PC-9 (cell line): ENCODE measurements at regions of chr15 and their contacts with region 1.

Region 1: DNA sequence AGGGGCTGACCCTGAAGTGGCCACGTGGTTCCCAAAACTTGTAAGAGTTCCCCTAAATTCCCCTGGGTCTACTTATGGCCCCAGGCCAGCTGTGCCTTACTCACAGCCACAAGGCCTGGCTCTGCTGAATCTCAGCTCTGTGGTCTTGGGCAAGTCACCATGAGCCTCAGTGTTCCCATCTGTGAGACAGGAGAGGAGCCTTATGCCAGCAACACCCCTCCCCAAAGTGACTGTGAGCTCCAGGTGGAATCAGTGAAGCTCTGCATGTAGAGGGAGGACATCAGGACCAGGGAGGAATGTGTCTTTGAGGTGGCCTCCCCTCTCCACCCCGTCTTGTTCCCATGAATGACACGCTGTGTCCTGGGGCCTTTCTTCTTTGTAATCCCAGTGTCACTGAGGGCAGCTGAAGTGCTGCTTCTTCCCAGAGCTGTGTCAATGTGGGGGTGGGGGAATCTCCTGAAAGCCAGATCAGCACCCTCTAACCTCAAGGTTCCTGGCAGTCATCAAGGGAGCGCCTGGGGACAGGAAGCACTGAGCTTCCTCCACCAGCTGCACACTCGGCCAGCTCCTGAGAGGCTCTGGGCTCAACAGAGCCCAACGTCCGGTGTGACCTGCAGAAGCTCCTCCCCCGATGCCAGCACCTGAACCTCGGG is 258.9 kb downstream of the UACA start:
- DNase-seq: peak; percentile 72 to 86
- H3K4me3 ChIP-seq: no peak overlapping the region
- H3K27ac ChIP-seq: peak overlapping the region; percentile 99
- H3K4me1 ChIP-seq: peaks cover 59% of the 10 kb centered on the region
- H3K27me3 ChIP-seq: no peaks in the 10 kb centered on the region
- CTCF ChIP-seq: no peak

Region 2: DNA sequence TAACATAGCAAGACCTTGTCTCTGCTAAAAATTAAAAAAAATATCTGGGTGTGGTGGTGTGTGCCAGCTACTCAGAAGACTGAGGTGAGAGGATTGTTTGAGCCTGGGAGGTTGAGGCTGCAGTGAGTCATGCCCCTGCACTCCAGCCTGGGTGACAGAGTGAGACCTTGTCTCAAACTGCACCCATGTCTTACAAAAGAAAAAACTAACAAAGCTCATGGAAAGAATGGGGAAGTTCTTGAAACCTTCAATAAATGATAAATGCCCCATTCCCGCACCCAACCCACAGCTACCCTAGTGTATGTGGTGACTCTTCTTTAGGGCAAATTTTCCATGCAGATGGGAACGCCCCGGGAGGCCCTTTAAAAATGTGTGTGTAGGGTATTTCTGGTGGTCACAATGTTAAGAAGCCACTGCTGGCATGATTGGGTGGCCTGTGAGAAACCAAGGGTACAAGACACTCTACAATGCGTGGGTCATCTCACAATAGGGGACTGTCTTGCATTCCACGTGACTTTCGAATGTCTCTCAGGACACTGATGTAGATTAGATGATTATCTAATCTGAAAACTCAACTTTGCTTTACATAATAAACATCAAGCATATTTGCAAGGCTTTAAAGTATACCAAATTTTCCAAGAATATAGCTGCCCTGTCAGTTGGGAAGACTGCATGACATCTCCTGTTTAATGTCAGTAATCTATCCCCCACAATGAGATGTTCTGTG is 1023.3 kb before region 1 on chr15:
- CTCF ChIA-PET with region 1: no interaction called
- POLR2A ChIA-PET with region 1: interaction called, 3 read pairs
- intact Hi-C with region 1: loop called (anchors 1 kb)
- DNase-seq: peak; percentile 76 to 95
- H3K4me3 ChIP-seq: no peak overlapping the region
- H3K27ac ChIP-seq: peak overlapping the region; percentile 70
- H3K4me1 ChIP-seq: peaks cover 43% of the 10 kb centered on the region
- H3K27me3 ChIP-seq: no peaks in the 10 kb centered on the region
- CTCF ChIP-seq: no peak

Region 3: DNA sequence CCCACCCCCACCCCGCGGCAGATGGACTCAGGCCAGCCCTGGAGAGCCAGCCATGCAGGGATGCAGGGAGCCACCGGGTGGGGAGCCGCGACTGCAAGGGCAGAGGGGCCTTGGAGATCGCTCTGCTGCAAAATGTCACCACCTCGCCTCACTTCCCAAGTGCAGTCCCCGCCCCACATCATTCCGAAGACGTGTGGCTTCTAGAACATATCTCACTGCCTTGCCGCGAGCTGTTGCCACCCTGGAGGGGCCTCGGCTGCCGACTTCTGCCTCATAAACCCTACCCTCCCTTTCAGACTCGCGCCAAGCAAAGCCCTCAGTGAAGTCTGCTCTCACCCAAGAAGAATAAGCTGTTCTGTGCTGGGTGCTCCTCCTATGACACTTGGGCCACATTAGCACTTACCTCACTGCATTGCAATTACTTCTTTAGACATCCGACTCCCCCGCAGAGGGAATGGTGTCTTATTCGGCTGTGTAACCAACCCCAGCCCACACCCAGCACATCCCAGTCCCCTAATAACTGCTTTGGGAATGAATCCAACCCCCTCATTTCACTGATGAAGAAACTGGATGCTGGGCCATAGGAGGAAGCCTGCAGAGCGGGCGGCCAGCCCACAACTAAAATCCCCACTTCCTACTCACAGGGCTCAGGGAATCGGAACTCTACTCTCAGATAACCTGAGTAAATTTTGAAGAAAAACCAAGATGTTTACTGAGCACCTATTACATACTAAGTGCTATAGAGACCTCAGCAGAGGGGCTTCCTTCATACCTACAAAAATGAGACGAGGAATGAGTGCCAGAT is 415.3 kb before region 1 on chr15:
- CTCF ChIA-PET with region 1: no interaction called
- POLR2A ChIA-PET with region 1: no interaction called
- intact Hi-C with region 1: no loop called
- DNase-seq: no peak
- H3K4me3 ChIP-seq: no peak overlapping the region
- H3K27ac ChIP-seq: no peak overlapping the region
- H3K4me1 ChIP-seq: peaks cover 34% of the 10 kb centered on the region
- H3K27me3 ChIP-seq: no peaks in the 10 kb centered on the region
- CTCF ChIP-seq: no peak

Region 4: DNA sequence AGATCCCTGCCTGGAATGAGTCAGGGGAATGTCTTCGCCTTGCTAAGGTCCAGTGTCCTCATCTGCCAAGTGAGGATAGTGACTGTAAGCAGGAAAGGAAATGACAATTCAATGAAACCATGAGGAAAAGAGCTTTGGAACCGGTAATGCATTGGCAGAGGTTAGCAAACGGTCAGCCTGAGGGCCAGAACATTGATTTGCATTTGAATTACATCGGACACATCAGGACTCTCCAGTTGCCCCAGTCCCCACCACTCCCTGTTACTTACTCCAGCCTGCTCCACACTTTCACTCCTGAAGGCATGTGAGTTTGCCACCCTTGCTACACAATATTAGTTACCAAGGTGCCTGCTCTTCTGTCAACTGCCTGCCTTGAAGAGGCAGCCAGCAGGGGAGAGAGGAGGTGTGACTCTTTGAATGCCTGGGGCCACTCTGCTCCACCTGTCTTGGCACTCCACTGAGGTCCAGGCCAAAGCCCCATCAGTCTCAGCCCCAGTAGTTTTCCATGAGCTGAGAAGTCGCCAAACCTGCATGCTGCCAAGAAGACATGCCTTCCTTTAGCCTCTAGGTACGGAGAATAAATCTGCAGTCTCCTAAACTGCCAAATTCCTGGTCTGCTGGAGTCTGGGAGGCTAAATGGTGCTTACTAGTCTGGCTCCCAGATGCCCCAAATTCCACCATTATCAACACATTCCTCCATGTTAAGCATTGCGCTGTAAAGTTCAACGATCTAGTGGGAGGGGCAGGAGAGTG is 215.0 kb before region 1 on chr15:
- CTCF ChIA-PET with region 1: no interaction called
- POLR2A ChIA-PET with region 1: no interaction called
- intact Hi-C with region 1: loop called (anchors 2 kb)
- DNase-seq: peak; percentile 86 to 90
- H3K4me3 ChIP-seq: no peak overlapping the region
- H3K27ac ChIP-seq: peak overlapping the region; percentile 61
- H3K4me1 ChIP-seq: peaks cover 39% of the 10 kb centered on the region
- H3K27me3 ChIP-seq: no peaks in the 10 kb centered on the region
- CTCF ChIP-seq: no peak

Region 5: GRCh38 chr15:70375006-70375431 is 129.4 kb before region 1 on chr15:
- CTCF ChIA-PET with region 1: no interaction called
- POLR2A ChIA-PET with region 1: no interaction called
- intact Hi-C with region 1: no loop called
- DNase-seq: peak; percentile 80 to 84
- H3K4me3 ChIP-seq: peak overlapping the region; percentile 27; the same call in 1 of the 2 replicates
- H3K27ac ChIP-seq: peak overlapping the region; percentile 61
- H3K4me1 ChIP-seq: peaks cover 30% of the 10 kb centered on the region
- H3K27me3 ChIP-seq: no peaks in the 10 kb centered on the region
- CTCF ChIP-seq: no peak

Region 6: GRCh38 chr15:70466895-70467529 is 37.4 kb before region 1 on chr15:
- CTCF ChIA-PET with region 1: interaction called, 5 read pairs
- POLR2A ChIA-PET with region 1: no interaction called
- intact Hi-C with region 1: loop called (anchors 2 kb)
- DNase-seq: peak; percentile 42 to 49
- H3K4me3 ChIP-seq: no peak overlapping the region
- H3K27ac ChIP-seq: no peak overlapping the region
- H3K4me1 ChIP-seq: peaks cover 63% of the 10 kb centered on the region
- H3K27me3 ChIP-seq: no peaks in the 10 kb centered on the region
- CTCF ChIP-seq: peak; percentile 70

Region 7: DNA sequence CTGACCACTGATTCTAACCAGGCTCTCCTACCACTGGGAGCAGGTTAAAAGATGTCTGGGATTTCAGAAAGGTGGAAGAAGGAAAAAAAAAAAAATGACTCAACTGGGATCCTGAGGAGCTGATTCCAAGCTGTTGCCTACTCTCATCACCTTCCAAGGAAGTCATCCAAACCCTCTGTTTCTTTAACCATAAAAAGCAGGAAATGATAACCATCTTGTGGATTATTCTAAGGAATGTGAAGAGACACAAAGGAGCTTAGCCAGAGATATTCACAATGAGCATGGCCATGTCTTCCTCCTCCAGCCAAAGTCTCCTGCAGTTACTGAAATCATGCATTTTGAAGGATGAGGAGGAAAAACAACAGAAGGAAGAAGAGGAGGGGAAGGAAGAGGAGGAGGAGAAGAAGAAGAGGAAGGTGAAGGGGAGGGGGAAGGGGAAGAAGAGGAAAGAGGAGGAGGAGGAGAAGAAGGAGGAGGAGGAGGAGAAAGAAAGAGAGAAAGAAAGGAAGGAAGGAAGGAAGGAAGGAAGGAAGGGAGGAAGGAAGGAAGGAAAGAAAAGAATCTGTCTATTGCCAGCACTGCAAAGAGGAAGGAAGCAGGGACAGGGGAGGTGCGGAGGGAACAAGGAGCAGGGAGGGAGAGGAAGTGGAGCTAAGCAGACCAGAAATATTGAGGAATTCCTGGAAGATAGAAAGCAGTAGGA is 29.7 kb after region 1 on chr15:
- CTCF ChIA-PET with region 1: interaction called, 25 read pairs
- POLR2A ChIA-PET with region 1: interaction called, 4 read pairs
- intact Hi-C with region 1: no loop called
- DNase-seq: no peak
- H3K4me3 ChIP-seq: no peak overlapping the region
- H3K27ac ChIP-seq: no peak overlapping the region
- H3K4me1 ChIP-seq: peaks cover 13% of the 10 kb centered on the region
- H3K27me3 ChIP-seq: no peaks in the 10 kb centered on the region
- CTCF ChIP-seq: no peak

Region 8: GRCh38 chr15:70584838-70585706 is 80.6 kb after region 1 on chr15:
- CTCF ChIA-PET with region 1: no interaction called
- POLR2A ChIA-PET with region 1: interaction called, 3 read pairs
- intact Hi-C with region 1: loop called (anchors 1 kb)
- DNase-seq: peak; percentile 71 to 86
- H3K4me3 ChIP-seq: peak overlapping the region; percentile 46; the same call in 1 of the 2 replicates
- H3K27ac ChIP-seq: peak overlapping the region; percentile 81
- H3K4me1 ChIP-seq: peaks cover 18% of the 10 kb centered on the region
- H3K27me3 ChIP-seq: no peaks in the 10 kb centered on the region
- CTCF ChIP-seq: peak; percentile 74

Region 9: DNA sequence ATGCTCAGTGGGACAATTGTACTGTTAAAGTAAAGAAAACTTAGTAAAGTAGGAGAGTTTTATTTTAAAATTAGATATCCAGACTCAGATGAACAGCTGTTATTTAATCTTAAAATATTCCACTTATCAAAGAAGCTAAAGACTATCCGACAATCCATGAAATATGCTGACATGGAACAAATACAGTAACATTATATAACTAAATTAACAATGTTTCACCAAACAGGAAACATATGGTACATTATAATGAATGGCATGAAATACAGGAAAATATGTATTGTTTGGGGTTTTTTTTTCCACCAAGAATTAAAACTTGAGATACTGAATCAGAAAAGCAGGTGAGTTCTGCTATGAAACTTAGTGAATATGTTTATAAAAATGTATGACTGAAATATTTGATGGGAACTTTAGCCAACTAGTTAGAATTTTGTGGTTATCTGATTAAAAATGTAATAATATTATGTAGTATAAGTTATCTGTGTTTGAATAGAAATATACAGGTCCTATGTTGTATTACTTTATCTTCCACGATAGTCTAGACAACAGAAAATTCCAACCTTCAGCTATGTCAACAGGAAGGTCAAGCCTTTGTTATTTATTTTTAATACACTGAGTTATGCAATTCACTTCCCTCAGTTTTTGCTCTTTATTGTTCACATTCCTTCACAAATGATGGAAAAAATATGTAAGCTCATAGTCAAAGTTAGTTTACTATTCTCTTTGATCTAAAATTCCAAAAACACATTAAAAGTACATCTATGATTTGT is 186.2 kb after region 1 on chr15:
- CTCF ChIA-PET with region 1: no interaction called
- POLR2A ChIA-PET with region 1: no interaction called
- intact Hi-C with region 1: no loop called
- DNase-seq: peak in 1 of 2 experiments; percentile 38
- H3K4me3 ChIP-seq: no peak overlapping the region
- H3K27ac ChIP-seq: no peak overlapping the region
- H3K4me1 ChIP-seq: peaks cover 11% of the 10 kb centered on the region
- H3K27me3 ChIP-seq: no peaks in the 10 kb centered on the region
- CTCF ChIP-seq: no peak